ENCODE measurements at regions of chr3 and their contacts with region 1.

Region 1: DNA sequence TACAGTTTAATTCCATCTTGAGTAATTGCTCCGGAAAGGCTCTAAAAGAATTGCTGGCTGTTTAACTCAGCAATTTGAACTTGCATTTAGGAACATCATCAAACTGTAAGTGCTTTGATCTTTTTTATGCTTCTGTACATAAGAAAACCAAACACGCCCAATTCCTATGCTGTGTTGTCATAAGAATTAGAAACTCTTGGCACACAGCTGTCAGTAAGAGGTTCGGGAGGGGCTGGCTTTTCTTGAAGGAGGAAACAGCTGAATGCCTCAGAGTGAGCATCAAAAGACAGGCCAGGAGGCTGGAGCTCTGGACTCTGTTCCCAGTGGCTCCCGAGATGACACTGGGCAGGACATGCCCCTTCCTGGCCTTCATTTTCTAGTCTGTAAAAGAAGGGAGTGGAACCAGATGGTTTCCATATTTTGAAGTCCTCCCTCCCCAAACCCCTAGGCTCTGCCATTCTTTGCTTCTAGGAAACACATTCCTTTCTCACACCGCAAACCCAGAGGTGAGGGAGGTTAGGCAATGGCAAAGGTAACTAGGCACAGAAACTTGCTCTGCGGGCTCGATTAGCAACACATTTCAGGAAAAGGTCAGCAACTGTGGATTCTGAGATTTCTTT is 73.7 kb upstream of the DLG1 start:
- DNase-seq: peak; percentile 98
- ATAC-seq: peak; percentile 73
- H3K4me3 ChIP-seq: peak overlapping the region; percentile 4; the same call in 1 of the 2 replicates
- H3K27ac ChIP-seq: peak overlapping the region; percentile 90
- H3K4me1 ChIP-seq: peaks cover 50% of the 10 kb centered on the region
- H3K27me3 ChIP-seq: no peaks in the 10 kb centered on the region
- CTCF ChIP-seq: no peak

Region 2: GRCh38 chr3:197422506-197422905 is 50.3 kb after region 1 on chr3:
- CTCF ChIA-PET with region 1: no interaction called
- POLR2A ChIA-PET with region 1: interaction called, 7 read pairs
- intact Hi-C with region 1: loop called (anchors 2 kb)
- DNase-seq: no peak
- ATAC-seq: no peak
- H3K4me3 ChIP-seq: no peak overlapping the region; the same call in 1 of the 2 replicates
- H3K27ac ChIP-seq: peak overlapping the region; percentile 77
- H3K4me1 ChIP-seq: peaks cover 19% of the 10 kb centered on the region
- H3K27me3 ChIP-seq: no peaks in the 10 kb centered on the region
- CTCF ChIP-seq: no peak

Region 3: GRCh38 chr3:197501879-197502620 is 129.9 kb after region 1 on chr3:
- CTCF ChIA-PET with region 1: interaction called, 4 read pairs
- POLR2A ChIA-PET with region 1: interaction called, 5 read pairs
- intact Hi-C with region 1: loop called (anchors 5 kb)
- DNase-seq: peak; percentile 84
- ATAC-seq: peak; percentile 69
- H3K4me3 ChIP-seq: no peak overlapping the region
- H3K27ac ChIP-seq: peak overlapping the region; percentile 61
- H3K4me1 ChIP-seq: peaks cover 30% of the 10 kb centered on the region
- H3K27me3 ChIP-seq: no peaks in the 10 kb centered on the region
- CTCF ChIP-seq: peak; percentile 93

Region 4: DNA sequence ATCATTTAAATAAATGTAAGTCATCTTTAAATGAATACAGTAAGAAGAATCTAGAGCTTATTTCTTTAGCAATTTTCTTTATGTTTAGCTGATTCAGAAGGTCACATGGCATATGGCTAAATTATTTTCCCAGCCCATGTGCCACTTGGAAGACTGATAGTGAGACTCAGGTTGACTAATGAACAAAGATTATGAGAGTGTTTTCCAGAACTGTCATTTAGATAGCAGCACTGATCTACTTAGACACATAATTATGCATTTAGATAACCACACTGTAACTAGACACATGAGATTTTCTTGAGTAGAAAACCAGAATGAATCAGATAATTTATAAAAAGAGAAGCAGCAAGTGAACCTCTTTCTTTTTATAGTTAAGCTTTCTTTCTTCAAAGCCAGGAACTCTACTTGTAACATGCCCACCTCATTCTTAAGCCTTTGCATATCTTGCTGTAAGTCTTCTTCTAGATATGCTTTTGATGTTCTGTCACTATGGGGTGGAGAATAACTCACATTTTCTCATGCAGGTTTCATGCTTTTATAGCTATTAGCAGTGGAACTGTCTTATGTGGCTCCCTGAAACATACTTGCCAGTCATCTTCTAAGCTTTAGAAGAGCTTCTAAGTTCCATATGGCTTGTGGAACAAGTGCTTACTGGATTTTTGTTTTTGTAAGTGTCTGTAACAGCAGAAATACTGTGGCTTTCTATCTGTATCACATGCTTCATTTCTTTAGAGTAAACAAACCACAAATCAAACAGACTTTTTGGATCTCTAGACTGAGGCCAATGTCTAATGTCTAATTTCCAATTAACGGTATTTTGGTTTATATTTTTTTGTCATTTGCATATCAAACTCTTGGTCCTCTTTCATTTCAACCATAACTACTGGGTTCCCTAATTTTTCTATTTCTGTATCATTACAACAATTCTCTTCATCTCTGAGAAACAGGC is 689.2 kb after region 1 on chr3:
- CTCF ChIA-PET with region 1: no interaction called
- POLR2A ChIA-PET with region 1: no interaction called
- intact Hi-C with region 1: no loop called
- DNase-seq: no peak
- ATAC-seq: no peak
- H3K4me3 ChIP-seq: no peak overlapping the region
- H3K27ac ChIP-seq: no peak overlapping the region
- H3K4me1 ChIP-seq: no peaks in the 10 kb centered on the region
- H3K27me3 ChIP-seq: peaks cover 59% of the 10 kb centered on the region
- CTCF ChIP-seq: no peak

Measured in PC-3 (cell line).